A673 (cell line): ENCODE measurements at regions of chr12 and their contacts with region 1.

Region 1: GRCh38 chr12:18643681-18644080 is 94.1 kb downstream of the PLCZ1 start:
- DNase-seq: no peak
- H3K4me3 ChIP-seq: no peak overlapping the region
- H3K27ac ChIP-seq: no peak overlapping the region
- H3K4me1 ChIP-seq: no peaks in the 10 kb centered on the region
- H3K27me3 ChIP-seq: peaks cover 11% of the 10 kb centered on the region
- CTCF ChIP-seq: no peak

Region 2: GRCh38 chr12:18430425-18431048 is 213.1 kb before region 1 on chr12:
- CTCF ChIA-PET with region 1: interaction called, 11 read pairs
- POLR2A ChIA-PET with region 1: no interaction called
- intact Hi-C with region 1: no loop called
- DNase-seq: peak; percentile 27
- H3K4me3 ChIP-seq: no peak overlapping the region
- H3K27ac ChIP-seq: no peak overlapping the region
- H3K4me1 ChIP-seq: no peaks in the 10 kb centered on the region
- H3K27me3 ChIP-seq: no peaks in the 10 kb centered on the region
- CTCF ChIP-seq: peak; percentile 69

Region 3: GRCh38 chr12:19277707-19278106 is 634.0 kb after region 1 on chr12:
- CTCF ChIA-PET with region 1: no interaction called
- POLR2A ChIA-PET with region 1: no interaction called
- intact Hi-C with region 1: no loop called
- DNase-seq: no peak
- H3K4me3 ChIP-seq: no peak overlapping the region
- H3K27ac ChIP-seq: no peak overlapping the region
- H3K4me1 ChIP-seq: peaks cover 45% of the 10 kb centered on the region
- H3K27me3 ChIP-seq: no peaks in the 10 kb centered on the region
- CTCF ChIP-seq: no peak